Activated CD4-positive, alpha-beta T cell treated with anti-CD3 and anti-CD28 coated beads, Interleukin-2, amount 10 ng/mL, durations not matched to agents 24 days and 14 days (primary cell): ENCODE measurements at regions of chr20 and their contacts with region 1.

Region 1: DNA sequence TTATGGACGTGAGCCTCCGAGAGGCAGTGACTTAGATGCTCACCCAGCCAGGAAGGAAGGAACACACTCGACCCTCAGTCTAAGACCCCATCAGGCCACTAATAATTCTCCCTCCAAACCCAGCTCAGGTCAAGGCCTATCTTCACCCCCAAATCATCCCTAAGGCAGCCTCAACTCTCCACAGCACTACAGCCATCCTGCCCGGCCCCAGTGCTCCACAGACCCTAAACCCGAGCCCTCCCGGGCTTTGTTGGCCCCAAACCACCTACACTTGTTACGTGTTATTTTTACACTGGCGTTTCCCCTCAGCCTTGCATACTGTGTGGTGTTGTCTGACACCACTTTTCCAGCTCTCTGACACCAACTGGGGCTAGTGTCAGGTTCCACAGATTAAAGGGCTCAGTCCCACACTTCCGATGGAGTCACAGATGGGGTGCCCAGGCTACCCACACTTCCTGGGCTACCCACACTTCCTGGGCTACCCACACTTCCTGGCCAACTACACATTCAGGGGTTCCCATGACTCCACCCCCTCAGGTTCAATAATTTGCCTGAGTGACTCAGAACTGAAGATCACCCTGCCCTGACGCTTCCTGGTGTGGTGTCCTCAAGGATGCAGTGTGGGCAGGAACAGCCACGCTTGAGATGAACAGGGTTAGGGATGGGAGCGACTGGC is 25.3 kb downstream of the RBCK1 start:
- DNase-seq: peak; percentile 87
- H3K4me3 Mint-ChIP-seq: peak overlapping the region; percentile 78
- H3K27ac Mint-ChIP-seq: peak overlapping the region; percentile 97
- H3K4me1 Mint-ChIP-seq: peaks cover 65% of the 10 kb centered on the region
- H3K27me3 Mint-ChIP-seq: no peaks in the 10 kb centered on the region

Region 2: GRCh38 chr20:266596-267562 is 166.6 kb before region 1 on chr20:
- intact Hi-C with region 1: no loop called
- DNase-seq: peak; percentile 96
- H3K4me3 Mint-ChIP-seq: peak overlapping the region; percentile 80
- H3K27ac Mint-ChIP-seq: peak overlapping the region; percentile 42
- H3K4me1 Mint-ChIP-seq: peaks cover 11% of the 10 kb centered on the region
- H3K27me3 Mint-ChIP-seq: peaks cover 10% of the 10 kb centered on the region

Region 3: DNA sequence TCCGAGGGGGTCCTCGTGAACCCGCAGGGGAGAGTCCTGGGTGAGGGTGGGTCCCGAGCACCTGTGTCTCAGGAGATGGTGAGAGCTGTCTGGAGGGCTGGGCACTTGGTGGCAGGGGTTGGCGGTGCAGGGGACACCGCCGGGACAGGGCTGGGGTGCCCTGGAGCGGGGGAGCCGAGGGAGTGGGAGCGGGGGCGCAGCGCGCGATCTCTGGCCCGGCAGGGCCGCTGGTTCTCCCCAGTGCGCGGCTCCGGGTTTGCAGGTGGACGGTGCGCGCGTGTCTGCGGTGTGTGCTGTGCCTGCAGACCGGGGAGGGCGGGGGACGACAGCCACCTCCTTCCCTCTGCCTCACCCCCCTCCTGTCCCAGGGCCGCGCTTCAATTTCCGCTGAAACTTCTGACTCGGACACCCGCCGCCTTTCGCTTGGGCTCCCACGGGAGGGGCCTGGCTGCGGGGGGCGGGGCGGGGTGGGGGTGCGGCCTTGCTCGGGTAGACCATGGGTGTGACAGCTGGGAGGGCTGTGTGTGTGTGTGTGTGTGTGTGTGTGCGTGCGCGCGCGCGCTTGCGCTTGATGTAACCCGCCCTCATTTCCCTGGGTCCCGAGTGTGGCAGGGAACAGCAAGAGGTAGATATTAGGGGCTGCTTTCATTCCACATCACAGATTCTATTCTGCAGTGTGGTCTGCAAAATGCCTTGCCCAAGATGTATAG is 51.7 kb before region 1 on chr20:
- intact Hi-C with region 1: loop called (anchors 2 kb)
- DNase-seq: peak; percentile 94
- H3K4me3 Mint-ChIP-seq: peak overlapping the region; percentile 85
- H3K27ac Mint-ChIP-seq: peak overlapping the region; percentile 85
- H3K4me1 Mint-ChIP-seq: peaks cover 30% of the 10 kb centered on the region
- H3K27me3 Mint-ChIP-seq: no peaks in the 10 kb centered on the region

Region 4: DNA sequence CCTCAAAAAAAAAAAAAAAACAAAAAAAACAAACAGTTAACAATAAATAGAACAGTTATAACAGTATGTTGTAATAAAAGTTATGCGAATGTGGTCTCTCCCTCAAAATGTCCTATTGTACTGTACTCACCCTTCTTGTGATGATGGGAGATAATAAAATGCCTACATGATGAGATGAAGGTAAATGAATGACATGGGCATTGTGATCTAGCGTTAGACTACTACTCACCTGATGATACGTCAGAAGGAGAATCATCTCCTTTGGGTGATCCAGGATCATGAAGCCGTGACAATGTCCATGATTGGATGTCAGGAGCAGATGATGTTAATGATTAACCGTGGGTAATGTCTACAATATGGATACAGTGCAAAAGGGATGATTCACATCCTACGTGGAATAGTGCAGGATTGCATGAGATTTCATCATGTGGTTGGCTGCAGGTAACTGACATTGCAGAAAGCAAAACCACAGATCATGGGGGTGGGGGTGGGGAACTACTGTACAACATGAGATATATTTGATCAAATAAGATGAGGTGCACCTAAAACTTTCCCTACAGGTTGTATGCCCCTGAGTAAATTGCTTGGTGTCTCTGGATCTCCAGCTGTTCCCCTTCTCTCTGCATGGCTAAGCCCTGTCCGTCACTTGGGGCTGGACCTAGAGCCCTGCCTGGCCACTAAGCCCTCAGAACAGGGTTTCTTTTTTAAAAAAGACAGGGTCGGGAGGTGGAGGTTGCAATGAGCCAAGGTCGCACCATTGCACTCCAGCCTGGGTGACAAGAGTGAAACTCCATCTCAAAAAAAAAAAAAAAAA is 31.5 kb before region 1 on chr20:
- intact Hi-C with region 1: no loop called
- DNase-seq: no peak
- H3K4me3 Mint-ChIP-seq: peak overlapping the region; percentile 45
- H3K27ac Mint-ChIP-seq: peak overlapping the region; percentile 28
- H3K4me1 Mint-ChIP-seq: peaks cover 30% of the 10 kb centered on the region
- H3K27me3 Mint-ChIP-seq: no peaks in the 10 kb centered on the region

Region 5: GRCh38 chr20:462199-462991 is 29.0 kb after region 1 on chr20 and contains the start of gene TBC1D20:
- intact Hi-C with region 1: loop called (anchors 1 kb)
- DNase-seq: peak; percentile 96
- H3K4me3 Mint-ChIP-seq: peak within 1 kb of the TSS; percentile 95
- H3K27ac Mint-ChIP-seq: peak within 1 kb of the TSS; percentile 92
- H3K4me1 Mint-ChIP-seq: peaks cover 41% of the 10 kb centered on the region
- H3K27me3 Mint-ChIP-seq: peaks cover 2% of the 10 kb centered on the region
- total RNA-seq, gene TBC1D20: 34.3 and 35.4 TPM in 2 replicates

Region 6: DNA sequence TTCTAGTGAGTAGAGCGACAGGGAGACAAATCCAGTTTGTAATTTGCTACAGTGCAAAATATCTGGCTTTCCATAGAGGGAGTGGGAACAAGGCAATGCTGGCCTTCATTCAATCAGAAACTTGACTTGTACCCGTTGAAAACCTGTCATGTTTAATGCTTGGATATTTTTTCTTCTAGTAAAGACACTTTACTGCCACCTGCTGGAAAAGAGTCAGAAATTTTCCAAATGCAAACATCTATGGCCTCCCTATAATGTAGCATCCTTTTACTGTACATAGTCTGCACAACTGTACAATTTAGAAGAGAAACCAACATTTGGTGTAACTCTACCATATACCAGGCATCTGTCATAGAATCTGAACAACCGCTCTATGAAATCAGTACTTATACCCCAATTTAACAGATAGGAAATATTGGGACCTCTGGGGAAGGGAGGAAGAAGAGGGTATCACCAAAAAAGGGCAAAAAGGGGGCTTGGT is 45.6 kb after region 1 on chr20:
- intact Hi-C with region 1: loop called (anchors 2 kb)
- DNase-seq: peak; percentile 86
- H3K4me3 Mint-ChIP-seq: no peak overlapping the region
- H3K27ac Mint-ChIP-seq: peak overlapping the region; percentile 52
- H3K4me1 Mint-ChIP-seq: peaks cover 31% of the 10 kb centered on the region
- H3K27me3 Mint-ChIP-seq: no peaks in the 10 kb centered on the region

Region 7: GRCh38 chr20:621125-621756 is 187.8 kb after region 1 on chr20:
- intact Hi-C with region 1: no loop called
- DNase-seq: no peak
- H3K4me3 Mint-ChIP-seq: no peak overlapping the region
- H3K27ac Mint-ChIP-seq: no peak overlapping the region
- H3K4me1 Mint-ChIP-seq: no peaks in the 10 kb centered on the region
- H3K27me3 Mint-ChIP-seq: peaks cover 40% of the 10 kb centered on the region